ENCODE measurements at regions of chr1 and their contacts with region 1.

Region 1: DNA sequence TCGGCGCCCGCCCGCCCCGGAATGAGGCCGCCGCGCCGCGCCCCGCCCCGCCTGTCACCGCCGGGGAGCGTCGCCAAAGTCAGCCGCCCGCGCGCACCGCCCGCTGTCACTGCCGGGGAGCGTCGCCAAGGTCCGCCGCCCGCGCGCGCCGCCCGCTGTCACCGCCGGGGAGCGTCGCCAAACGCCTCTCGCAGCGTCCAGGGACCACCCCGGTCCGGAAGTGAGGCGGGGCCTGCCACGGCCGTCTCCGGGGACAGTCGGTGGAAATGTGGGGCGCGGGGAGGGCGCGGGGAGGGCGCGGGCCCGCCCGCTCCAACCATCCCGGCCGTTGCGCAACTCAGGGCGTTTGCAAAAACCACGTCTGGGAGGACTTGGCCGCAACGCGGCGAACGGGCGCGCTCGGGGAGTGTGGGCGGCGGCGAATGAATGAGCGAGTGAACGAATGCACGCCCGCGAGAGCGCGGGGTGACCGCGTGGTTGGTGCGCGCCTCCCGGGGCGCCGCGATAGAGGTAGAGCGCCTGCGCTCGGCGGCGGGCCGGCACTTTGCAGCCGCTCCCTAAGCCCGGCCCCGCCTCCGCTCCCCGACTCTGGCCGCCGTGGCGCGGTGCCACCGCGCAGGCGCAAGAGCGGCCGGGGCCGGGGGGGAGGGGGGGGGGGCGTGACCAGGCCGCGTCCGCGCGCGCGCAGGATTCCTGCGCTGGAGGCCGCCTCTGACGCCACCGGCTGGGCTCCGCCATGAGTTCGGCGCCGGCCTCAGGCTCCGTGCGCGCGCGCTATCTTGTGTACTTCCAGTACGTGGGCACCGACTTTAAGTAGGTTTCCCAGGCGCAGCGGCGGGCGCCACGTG is at the starts of genes ACAP3 and PUSL1:
- DNase-seq: peak; percentile 89
- H3K4me3 Mint-ChIP-seq: peak within 1 kb of the TSS; percentile 85
- H3K27ac Mint-ChIP-seq: peak within 1 kb of the TSS; percentile 79
- H3K4me1 Mint-ChIP-seq: peaks cover 10% of the 10 kb centered on the region
- H3K27me3 Mint-ChIP-seq: no peaks in the 10 kb centered on the region
- total RNA-seq, gene ACAP3: 43.4 and 50.1 TPM in 2 replicates
- total RNA-seq, gene PUSL1: 31.6 and 31.8 TPM in 2 replicates

Region 2: GRCh38 chr1:1324521-1325287 is 16.6 kb after region 1 on chr1 and contains the starts of genes CPTP and INTS11:
- intact Hi-C with region 1: loop called (anchors 1 kb)
- DNase-seq: peak; percentile 93
- H3K4me3 Mint-ChIP-seq: peak within 1 kb of the TSS; percentile 90
- H3K27ac Mint-ChIP-seq: peak within 1 kb of the TSS; percentile 87
- H3K4me1 Mint-ChIP-seq: peaks cover 18% of the 10 kb centered on the region
- H3K27me3 Mint-ChIP-seq: no peaks in the 10 kb centered on the region
- total RNA-seq, gene CPTP: 12.1 and 13.1 TPM in 2 replicates
- total RNA-seq, gene INTS11: 127 and 138 TPM in 2 replicates

Region 3: GRCh38 chr1:1349256-1350012 is 41.3 kb after region 1 on chr1 and contains the start of gene DVL1:
- intact Hi-C with region 1: loop called (anchors 2 kb)
- DNase-seq: peak; percentile 62
- H3K4me3 Mint-ChIP-seq: peak within 1 kb of the TSS; percentile 77
- H3K27ac Mint-ChIP-seq: peak within 1 kb of the TSS; percentile 28
- H3K4me1 Mint-ChIP-seq: peaks cover 5% of the 10 kb centered on the region
- H3K27me3 Mint-ChIP-seq: peaks cover 16% of the 10 kb centered on the region
- total RNA-seq, gene DVL1: 53.8 and 60.7 TPM in 2 replicates

Region 4: DNA sequence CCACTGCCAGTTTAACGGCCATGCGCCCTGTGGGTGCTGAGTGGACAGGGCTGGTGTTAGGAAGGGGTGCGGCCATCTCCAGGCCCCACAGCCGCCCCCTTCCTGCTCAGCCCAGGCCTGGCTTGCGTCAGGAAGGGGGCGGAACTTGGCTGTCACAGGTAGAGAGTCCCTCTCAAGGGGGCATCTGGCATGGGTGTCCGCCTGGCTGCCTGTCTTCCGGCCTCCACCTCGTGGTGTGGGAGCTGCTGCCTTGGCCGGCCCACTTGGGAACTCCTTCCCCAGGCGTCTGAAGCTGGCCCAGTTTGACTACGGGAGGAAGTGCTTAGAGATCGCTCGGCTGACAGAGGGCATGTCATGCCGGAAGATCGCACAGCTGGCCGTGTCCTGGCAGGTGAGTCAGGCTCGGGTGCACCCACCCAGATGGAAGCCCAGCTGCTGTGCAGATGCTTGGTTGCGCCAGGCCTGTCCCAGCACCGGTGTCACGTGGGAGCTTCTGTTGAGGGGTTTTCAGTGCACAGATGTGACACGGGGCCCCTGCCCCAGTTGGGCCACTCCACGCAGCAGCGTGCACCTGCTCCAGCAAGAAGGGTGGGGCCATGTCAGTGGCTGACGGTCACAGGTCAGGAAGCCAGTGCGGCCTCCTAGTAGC is 154.3 kb after region 1 on chr1:
- intact Hi-C with region 1: no loop called
- DNase-seq: no peak
- H3K4me3 Mint-ChIP-seq: no peak overlapping the region
- H3K27ac Mint-ChIP-seq: no peak overlapping the region
- H3K4me1 Mint-ChIP-seq: no peaks in the 10 kb centered on the region
- H3K27me3 Mint-ChIP-seq: no peaks in the 10 kb centered on the region